ENCODE measurements at regions of chr10 and their contacts with region 1.

Region 1: DNA sequence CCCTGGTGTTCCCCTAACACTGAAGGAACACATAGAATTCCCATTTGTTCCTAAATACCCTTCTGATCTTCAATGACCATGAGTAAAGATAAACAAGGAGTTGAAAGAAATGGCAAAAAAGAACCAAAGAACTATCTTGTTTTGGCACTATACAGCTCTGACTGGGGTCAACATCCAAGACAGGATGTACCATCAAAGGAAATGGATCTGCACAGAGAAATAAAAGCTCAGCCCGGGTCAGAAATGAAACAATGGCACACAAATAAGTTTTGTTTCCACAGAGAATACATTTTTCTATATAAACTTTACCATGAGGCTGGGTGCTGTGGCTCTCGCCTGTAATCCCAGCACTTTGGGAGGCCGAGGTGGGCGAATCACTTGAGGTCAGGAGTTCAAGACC is 18.0 kb upstream of the USP54 start:
- DNase-seq: no peak
- ATAC-seq: no peak
- H3K4me3 Mint-ChIP-seq: no peak overlapping the region
- H3K27ac Mint-ChIP-seq: no peak overlapping the region
- H3K4me1 Mint-ChIP-seq: no peaks in the 10 kb centered on the region
- H3K27me3 Mint-ChIP-seq: no peaks in the 10 kb centered on the region
- CTCF ChIP-seq: no peak

Region 2: DNA sequence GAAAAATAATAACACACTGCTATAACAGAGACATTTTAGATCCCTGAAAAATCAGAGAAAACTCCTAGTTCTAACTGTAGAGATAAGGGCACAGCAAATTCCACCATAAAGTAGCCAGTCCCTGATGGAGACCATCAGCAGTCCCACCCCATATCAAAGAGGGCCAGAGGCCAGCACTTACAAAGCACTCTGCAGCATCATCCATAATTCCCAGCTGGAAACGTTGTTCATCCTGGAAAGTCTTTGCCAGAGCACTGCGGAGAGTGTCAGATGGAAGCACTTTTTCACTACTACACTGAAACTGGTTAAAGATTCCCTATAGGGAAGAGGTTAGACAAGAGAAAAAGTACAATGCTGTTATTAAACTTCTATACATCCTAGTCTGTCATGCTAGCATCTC is 63.8 kb before region 1 on chr10:
- CTCF ChIA-PET with region 1: no interaction called
- POLR2A ChIA-PET with region 1: interaction called, 14 read pairs
- intact Hi-C with region 1: no loop called
- DNase-seq: no peak
- ATAC-seq: no peak
- H3K4me3 Mint-ChIP-seq: no peak overlapping the region
- H3K27ac Mint-ChIP-seq: no peak overlapping the region
- H3K4me1 Mint-ChIP-seq: no peaks in the 10 kb centered on the region
- H3K27me3 Mint-ChIP-seq: no peaks in the 10 kb centered on the region
- CTCF ChIP-seq: no peak